BJ (cell line): ENCODE measurements at regions of chr10 and their contacts with region 1.

Region 1: GRCh38 chr10:5932345-5932744 is 42.3 kb downstream of the FBH1 start:
- DNase-seq: no peak
- H3K4me3 ChIP-seq: no peak overlapping the region
- H3K27me3 ChIP-seq: no peaks in the 10 kb centered on the region
- CTCF ChIP-seq: no peak

Region 2: DNA sequence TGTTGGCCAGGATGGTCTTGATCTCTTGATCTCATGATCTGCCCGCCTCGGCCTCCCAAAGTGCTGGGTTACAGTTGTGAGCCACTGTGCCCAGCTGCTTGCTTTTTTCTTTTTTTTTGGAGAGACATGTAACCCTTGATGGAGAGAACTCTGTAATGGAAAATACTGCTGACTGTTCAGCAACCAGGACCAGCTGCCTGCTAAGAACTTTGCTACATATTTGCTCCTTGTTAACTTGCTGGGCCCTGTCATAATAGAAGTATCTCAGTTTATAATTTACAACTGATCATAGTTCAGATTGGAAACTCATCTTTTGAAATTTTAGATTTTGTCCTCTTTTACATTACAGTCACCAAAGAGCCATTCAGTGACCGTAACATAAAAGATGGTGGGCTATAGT is 212.8 kb before region 1 on chr10:
- CTCF ChIA-PET with region 1: no interaction called
- POLR2A ChIA-PET with region 1: interaction called, 14 read pairs
- DNase-seq: no peak
- H3K4me3 ChIP-seq: no peak overlapping the region
- H3K27me3 ChIP-seq: no peaks in the 10 kb centered on the region
- CTCF ChIP-seq: no peak

Region 3: GRCh38 chr10:5743736-5744135 is 188.6 kb before region 1 on chr10:
- CTCF ChIA-PET with region 1: no interaction called
- POLR2A ChIA-PET with region 1: no interaction called
- DNase-seq: no peak
- H3K4me3 ChIP-seq: no peak overlapping the region
- H3K27me3 ChIP-seq: no peaks in the 10 kb centered on the region
- CTCF ChIP-seq: no peak

Region 4: GRCh38 chr10:5813287-5814109 is 118.8 kb before region 1 on chr10 and contains the start of gene GDI2:
- CTCF ChIA-PET with region 1: no interaction called
- POLR2A ChIA-PET with region 1: interaction called, 13 read pairs
- DNase-seq: peak; percentile 69
- H3K4me3 ChIP-seq: peak within 1 kb of the TSS; percentile 96
- H3K27me3 ChIP-seq: no peaks in the 10 kb centered on the region
- CTCF ChIP-seq: no peak
- polyA plus RNA-seq, gene GDI2: 148 and 225 TPM in 2 replicates